CD8-positive, alpha-beta T cell (primary cell): ENCODE measurements at regions of chr2 and their contacts with region 1.

Region 1: GRCh38 chr2:57782587-57782986 is 264.0 kb upstream of the VRK2 start:
- DNase-seq: no peak
- ATAC-seq: no peak
- H3K4me3 ChIP-seq: no peak overlapping the region
- H3K4me3 Mint-ChIP-seq: no peak overlapping the region
- H3K27ac ChIP-seq: no peak overlapping the region
- H3K27ac Mint-ChIP-seq: no peak overlapping the region
- H3K4me1 ChIP-seq: no peaks in the 10 kb centered on the region
- H3K4me1 Mint-ChIP-seq: no peaks in the 10 kb centered on the region
- H3K27me3 ChIP-seq: no peaks in the 10 kb centered on the region
- H3K27me3 Mint-ChIP-seq: no peaks in the 10 kb centered on the region
- CTCF ChIP-seq: no peak

Region 2: DNA sequence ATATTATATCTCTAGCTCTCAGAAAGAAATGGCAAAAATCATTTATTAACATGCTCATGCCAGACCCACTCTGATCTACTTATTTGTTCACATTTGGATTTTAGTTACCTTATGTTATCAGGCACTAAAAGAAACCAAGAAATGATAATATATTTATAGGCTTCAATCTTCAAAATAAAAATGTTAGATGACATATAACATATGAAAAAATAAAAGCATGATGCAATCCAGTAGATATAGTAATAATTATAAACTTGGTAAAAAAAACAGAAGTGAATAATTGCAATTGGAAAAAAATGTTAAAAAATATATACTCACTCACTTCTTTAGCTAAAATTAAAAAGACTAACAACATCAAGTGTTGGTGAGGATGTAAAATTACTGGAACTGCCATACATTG is 15.8 kb after region 1 on chr2:
- CTCF ChIA-PET with region 1: no interaction called
- POLR2A ChIA-PET with region 1: no interaction called
- intact Hi-C with region 1: loop called in 1 of 2 experiments (anchors 2 kb)
- DNase-seq: no peak
- ATAC-seq: no peak
- H3K4me3 ChIP-seq: no peak overlapping the region
- H3K4me3 Mint-ChIP-seq: no peak overlapping the region
- H3K27ac ChIP-seq: no peak overlapping the region
- H3K27ac Mint-ChIP-seq: no peak overlapping the region
- H3K4me1 ChIP-seq: no peaks in the 10 kb centered on the region
- H3K4me1 Mint-ChIP-seq: no peaks in the 10 kb centered on the region
- H3K27me3 ChIP-seq: no peaks in the 10 kb centered on the region
- H3K27me3 Mint-ChIP-seq: no peaks in the 10 kb centered on the region
- CTCF ChIP-seq: no peak

Region 3: DNA sequence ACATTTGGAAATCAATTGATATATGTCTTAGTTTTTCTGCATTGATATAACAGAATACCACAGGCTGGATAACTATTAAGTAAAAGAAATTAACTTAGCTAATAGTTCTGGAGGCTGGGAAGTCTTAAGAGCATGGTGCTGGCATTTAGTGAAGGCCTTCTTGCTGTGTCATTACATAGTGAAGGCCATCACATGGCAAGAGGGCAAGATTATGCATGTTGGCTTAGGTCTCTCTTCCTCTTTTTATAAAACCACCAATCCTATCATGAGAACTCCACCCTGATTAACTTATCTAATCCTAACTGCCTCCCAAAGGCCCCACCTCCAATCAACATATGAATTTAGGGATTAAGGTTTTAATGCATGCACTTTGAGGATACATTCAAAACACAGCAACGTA is 38.5 kb after region 1 on chr2:
- CTCF ChIA-PET with region 1: no interaction called
- POLR2A ChIA-PET with region 1: no interaction called
- intact Hi-C with region 1: no loop called
- DNase-seq: no peak
- ATAC-seq: no peak
- H3K4me3 ChIP-seq: no peak overlapping the region
- H3K4me3 Mint-ChIP-seq: no peak overlapping the region
- H3K27ac ChIP-seq: no peak overlapping the region
- H3K27ac Mint-ChIP-seq: no peak overlapping the region
- H3K4me1 ChIP-seq: no peaks in the 10 kb centered on the region
- H3K4me1 Mint-ChIP-seq: no peaks in the 10 kb centered on the region
- H3K27me3 ChIP-seq: no peaks in the 10 kb centered on the region
- H3K27me3 Mint-ChIP-seq: no peaks in the 10 kb centered on the region
- CTCF ChIP-seq: no peak